ENCODE measurements at regions of chr5 and their contacts with region 1.

Region 1: GRCh38 chr5:156920042-156920860 is 42.8 kb downstream of the TIMD4 start:
- DNase-seq: peak; percentile 89
- H3K4me3 Mint-ChIP-seq: peak overlapping the region; percentile 55
- H3K27ac Mint-ChIP-seq: peak overlapping the region; percentile 93
- H3K4me1 Mint-ChIP-seq: peaks cover 70% of the 10 kb centered on the region
- H3K27me3 Mint-ChIP-seq: no peaks in the 10 kb centered on the region

Region 2: DNA sequence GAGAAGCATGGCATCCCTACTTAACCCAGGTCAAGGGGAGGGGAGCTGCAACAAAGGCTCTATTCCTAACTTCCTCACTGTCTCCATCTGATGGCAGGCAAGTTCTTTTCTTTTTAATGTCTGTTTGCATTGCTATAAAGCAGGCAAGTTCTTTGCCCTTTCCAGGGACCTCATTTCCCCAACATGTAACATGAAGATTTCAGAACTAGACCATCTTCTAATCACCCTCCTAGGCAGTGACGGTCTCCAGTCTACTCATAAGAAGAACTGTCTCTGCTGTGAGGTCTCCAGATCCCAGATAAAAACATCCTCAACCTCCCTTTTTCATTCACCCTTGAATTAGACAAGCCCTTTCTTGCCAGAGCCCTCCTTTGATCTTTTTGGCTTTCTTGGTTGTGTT is 28.0 kb before region 1 on chr5:
- CTCF ChIA-PET with region 1: interaction called, 5 read pairs
- intact Hi-C with region 1: loop called (anchors 1 kb)
- DNase-seq: no peak
- H3K4me3 Mint-ChIP-seq: no peak overlapping the region
- H3K27ac Mint-ChIP-seq: peak overlapping the region; percentile 78
- H3K4me1 Mint-ChIP-seq: peaks cover 41% of the 10 kb centered on the region
- H3K27me3 Mint-ChIP-seq: no peaks in the 10 kb centered on the region

Region 3: GRCh38 chr5:157100140-157100679 is 180.0 kb after region 1 on chr5:
- CTCF ChIA-PET with region 1: no interaction called
- intact Hi-C with region 1: loop called (anchors 1 kb)
- DNase-seq: peak; percentile 71
- H3K4me3 Mint-ChIP-seq: peak overlapping the region; percentile 32
- H3K27ac Mint-ChIP-seq: peak overlapping the region; percentile 96
- H3K4me1 Mint-ChIP-seq: peaks cover 29% of the 10 kb centered on the region
- H3K27me3 Mint-ChIP-seq: no peaks in the 10 kb centered on the region

Region 4: DNA sequence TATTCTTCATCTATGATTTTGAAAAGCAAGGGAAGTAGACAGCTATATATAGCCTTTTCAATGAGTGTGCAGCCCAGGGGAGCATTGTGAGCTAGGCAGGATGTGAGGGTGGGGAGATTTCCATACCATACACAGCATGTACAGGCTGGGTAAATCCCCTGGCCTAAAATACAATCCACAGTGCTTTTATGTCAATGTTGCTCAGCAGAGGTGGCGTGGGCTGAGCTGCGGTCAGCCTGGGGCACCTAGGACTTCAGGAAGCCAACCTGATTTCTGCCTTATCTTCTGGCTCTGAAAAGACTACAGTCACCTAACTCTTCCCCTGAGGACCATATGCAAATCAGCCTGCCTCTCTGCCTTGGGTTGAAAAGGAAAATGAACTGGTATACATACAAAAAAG is 252.2 kb after region 1 on chr5:
- CTCF ChIA-PET with region 1: no interaction called
- intact Hi-C with region 1: loop called (anchors 1 kb)
- DNase-seq: peak; percentile 96
- H3K4me3 Mint-ChIP-seq: peak overlapping the region; percentile 64
- H3K27ac Mint-ChIP-seq: peak overlapping the region; percentile 100
- H3K4me1 Mint-ChIP-seq: peaks cover 86% of the 10 kb centered on the region
- H3K27me3 Mint-ChIP-seq: no peaks in the 10 kb centered on the region

Region 5: GRCh38 chr5:157354800-157355199 is 434.5 kb after region 1 on chr5:
- CTCF ChIA-PET with region 1: no interaction called
- intact Hi-C with region 1: loop called (anchors 5 kb)
- DNase-seq: no peak
- H3K4me3 Mint-ChIP-seq: no peak overlapping the region
- H3K27ac Mint-ChIP-seq: no peak overlapping the region
- H3K4me1 Mint-ChIP-seq: peaks cover 36% of the 10 kb centered on the region
- H3K27me3 Mint-ChIP-seq: no peaks in the 10 kb centered on the region

Measured in activated naive CD4-positive, alpha-beta T cell treated with anti-CD3 and anti-CD28 coated beads for 36 hours (primary cell).